Heart left ventricle (tissue), 16 donors: ENCODE measurements at regions of chr5 and their contacts with region 1.

Region 1: GRCh38 chr5:95781101-95781583 is 41.4 kb downstream of the GLRX start:
- DNase-seq: peak; percentile 80 to 88 (median 82)
- ATAC-seq: peak; percentile 78 to 93 (median 92)
- H3K4me3 ChIP-seq: no peak overlapping the region
- H3K27ac ChIP-seq: peak overlapping the region; percentile 11 to 77 (median 30)
- H3K4me1 ChIP-seq: peaks cover 0 to 52% (median 20%) of the 10 kb centered on the region in 12 donors
- H3K27me3 ChIP-seq: no peaks in the 10 kb centered on the region
- CTCF ChIP-seq: peak; percentile 73 to 97 (median 88)
- POLR2A ChIP-seq: no peak

Region 2: GRCh38 chr5:95664204-95664786 is 116.8 kb before region 1 on chr5:
- intact Hi-C with region 1: loop called in 5 of 10 experiments (anchors 5 to 10 kb)
- DNase-seq: no peak
- ATAC-seq: peak in 2 of 4 donors; percentile 39 to 45
- H3K4me3 ChIP-seq: no peak overlapping the region
- H3K27ac ChIP-seq: peak overlapping the region in 3 of 12 donors; percentile 26 to 37 (median 34)
- H3K4me1 ChIP-seq: peaks cover 0 to 25% (median 9%) of the 10 kb centered on the region in 12 donors
- H3K27me3 ChIP-seq: no peaks in the 10 kb centered on the region
- CTCF ChIP-seq: peak; percentile 65 to 89 (median 83)
- POLR2A ChIP-seq: no peak

Region 3: GRCh38 chr5:95817440-95817839 is 36.3 kb after region 1 on chr5:
- intact Hi-C with region 1: loop called in 1 of 10 experiments (anchors 5 kb)
- DNase-seq: peak in 1 of 5 donors; percentile 45
- ATAC-seq: peak in 3 of 4 donors; percentile 21 to 49 (median 46)
- H3K4me3 ChIP-seq: peak overlapping the region in 9 of 12 donors; percentile 24 to 93 (median 36)
- H3K27ac ChIP-seq: peak overlapping the region in 11 of 12 donors; percentile 12 to 95 (median 66)
- H3K4me1 ChIP-seq: peaks cover 10 to 83% (median 56%) of the 10 kb centered on the region in 12 donors
- H3K27me3 ChIP-seq: no peaks in the 10 kb centered on the region
- CTCF ChIP-seq: no peak
- POLR2A ChIP-seq: no peak